ENCODE measurements at regions of chr9 and their contacts with region 1.

Region 1: DNA sequence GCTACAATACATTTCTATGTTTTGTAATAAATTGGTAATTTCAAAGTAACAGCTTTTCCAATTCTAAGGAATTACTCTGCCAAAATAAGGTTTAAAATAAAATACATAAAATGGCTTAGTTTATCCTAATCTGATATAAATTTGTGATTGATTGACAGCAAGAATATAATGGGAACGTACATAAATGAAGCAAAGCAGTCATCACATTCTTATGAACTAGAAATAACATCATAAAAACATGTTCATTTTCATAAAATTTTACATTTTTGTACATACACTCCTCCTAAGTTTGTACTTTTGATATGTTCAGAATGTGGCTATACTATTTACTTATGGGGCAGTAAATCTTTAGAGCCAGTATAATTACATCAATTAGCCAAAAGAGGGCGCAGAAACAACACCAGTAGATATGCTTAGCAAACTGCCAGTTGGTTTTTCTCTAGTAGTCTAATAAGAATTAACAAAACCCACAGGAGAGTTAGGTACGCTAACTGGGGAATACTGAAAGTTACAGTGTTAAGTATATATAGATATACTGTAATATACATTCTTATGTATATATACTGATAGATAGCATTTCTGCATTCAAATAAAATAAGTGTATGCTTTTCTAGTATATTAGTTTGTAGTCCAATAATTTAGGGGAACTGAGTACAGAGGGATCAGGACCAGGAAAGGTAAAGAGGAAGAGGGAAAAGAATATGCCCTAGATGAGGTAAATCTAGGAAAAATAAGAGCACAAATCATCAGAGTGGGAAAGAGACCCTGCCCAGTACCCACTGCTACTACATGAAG is 76.8 kb downstream of the ZDHHC21 start:
- DNase-seq: peak; percentile 64
- ATAC-seq: peak; percentile 65
- H3K4me3 ChIP-seq: no peak overlapping the region
- H3K27ac ChIP-seq: no peak overlapping the region
- H3K4me1 ChIP-seq: no peaks in the 10 kb centered on the region
- H3K27me3 ChIP-seq: no peaks in the 10 kb centered on the region
- CTCF ChIP-seq: peak; percentile 76

Region 2: DNA sequence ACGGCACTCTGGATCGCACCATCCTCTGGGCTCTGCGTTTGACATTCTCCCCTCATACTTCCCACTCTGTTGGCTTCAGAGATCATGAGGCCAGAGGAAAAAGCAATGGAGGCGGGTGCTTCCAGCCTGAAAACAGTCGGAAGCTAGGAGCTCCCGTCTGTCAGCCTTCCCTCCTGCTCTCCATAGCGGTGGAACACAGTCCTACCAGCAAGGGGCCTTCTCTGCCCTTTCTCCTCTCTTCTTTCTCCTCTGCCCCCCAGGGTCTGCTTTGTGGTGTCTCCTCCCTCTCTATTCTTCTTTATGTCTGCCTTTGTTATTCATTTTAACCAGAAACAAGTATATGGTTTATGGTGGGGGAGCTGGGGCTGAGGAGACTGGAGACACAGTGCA is 150.0 kb before region 1 on chr9:
- CTCF ChIA-PET with region 1: no interaction called
- POLR2A ChIA-PET with region 1: no interaction called
- intact Hi-C with region 1: loop called (anchors 2 kb)
- DNase-seq: no peak
- ATAC-seq: no peak
- H3K4me3 ChIP-seq: no peak overlapping the region
- H3K27ac ChIP-seq: no peak overlapping the region
- H3K4me1 ChIP-seq: no peaks in the 10 kb centered on the region
- H3K27me3 ChIP-seq: no peaks in the 10 kb centered on the region
- CTCF ChIP-seq: no peak

Region 3: DNA sequence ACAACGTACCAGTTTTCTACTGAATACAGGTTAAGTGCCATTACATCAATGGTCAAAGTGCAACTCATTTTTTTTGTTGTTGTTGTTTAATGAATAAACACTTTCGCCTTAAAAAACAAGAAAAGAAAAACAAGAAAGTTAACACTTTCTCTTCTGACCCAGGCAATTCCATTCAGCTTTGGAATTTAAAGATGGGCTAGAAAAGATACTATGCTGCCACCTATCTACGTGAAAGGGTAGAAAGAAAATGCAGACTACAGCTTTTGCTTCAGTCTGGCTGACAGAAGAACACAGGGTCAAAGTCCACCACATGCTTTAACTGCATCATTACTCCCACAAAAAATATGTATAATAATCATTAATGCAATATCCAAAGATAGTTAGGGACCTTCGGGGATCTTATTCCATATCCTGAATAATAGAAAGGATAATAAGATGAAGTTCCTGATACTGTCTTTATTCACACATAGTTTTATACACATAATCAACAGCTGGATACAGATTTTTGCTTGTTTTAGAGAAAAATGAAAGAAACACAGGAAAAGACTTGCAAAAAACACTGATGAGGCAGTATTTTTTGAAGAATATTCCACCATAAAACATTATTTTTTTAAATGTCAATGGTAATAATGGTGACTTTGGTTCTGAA is 36.5 kb after region 1 on chr9:
- CTCF ChIA-PET with region 1: no interaction called
- POLR2A ChIA-PET with region 1: no interaction called
- intact Hi-C with region 1: loop called (anchors 5 kb)
- DNase-seq: peak; percentile 37
- ATAC-seq: peak; percentile 49; the same call in 1 of the 2 replicates
- H3K4me3 ChIP-seq: no peak overlapping the region
- H3K27ac ChIP-seq: no peak overlapping the region
- H3K4me1 ChIP-seq: no peaks in the 10 kb centered on the region
- H3K27me3 ChIP-seq: no peaks in the 10 kb centered on the region
- CTCF ChIP-seq: peak; percentile 70

Region 4: GRCh38 chr9:14661421-14662059 is 45.2 kb after region 1 on chr9:
- CTCF ChIA-PET with region 1: no interaction called
- POLR2A ChIA-PET with region 1: no interaction called
- intact Hi-C with region 1: loop called (anchors 2 kb)
- DNase-seq: peak; percentile 62
- ATAC-seq: no peak
- H3K4me3 ChIP-seq: no peak overlapping the region
- H3K27ac ChIP-seq: no peak overlapping the region
- H3K4me1 ChIP-seq: no peaks in the 10 kb centered on the region
- H3K27me3 ChIP-seq: no peaks in the 10 kb centered on the region
- CTCF ChIP-seq: peak; percentile 73

Region 5: DNA sequence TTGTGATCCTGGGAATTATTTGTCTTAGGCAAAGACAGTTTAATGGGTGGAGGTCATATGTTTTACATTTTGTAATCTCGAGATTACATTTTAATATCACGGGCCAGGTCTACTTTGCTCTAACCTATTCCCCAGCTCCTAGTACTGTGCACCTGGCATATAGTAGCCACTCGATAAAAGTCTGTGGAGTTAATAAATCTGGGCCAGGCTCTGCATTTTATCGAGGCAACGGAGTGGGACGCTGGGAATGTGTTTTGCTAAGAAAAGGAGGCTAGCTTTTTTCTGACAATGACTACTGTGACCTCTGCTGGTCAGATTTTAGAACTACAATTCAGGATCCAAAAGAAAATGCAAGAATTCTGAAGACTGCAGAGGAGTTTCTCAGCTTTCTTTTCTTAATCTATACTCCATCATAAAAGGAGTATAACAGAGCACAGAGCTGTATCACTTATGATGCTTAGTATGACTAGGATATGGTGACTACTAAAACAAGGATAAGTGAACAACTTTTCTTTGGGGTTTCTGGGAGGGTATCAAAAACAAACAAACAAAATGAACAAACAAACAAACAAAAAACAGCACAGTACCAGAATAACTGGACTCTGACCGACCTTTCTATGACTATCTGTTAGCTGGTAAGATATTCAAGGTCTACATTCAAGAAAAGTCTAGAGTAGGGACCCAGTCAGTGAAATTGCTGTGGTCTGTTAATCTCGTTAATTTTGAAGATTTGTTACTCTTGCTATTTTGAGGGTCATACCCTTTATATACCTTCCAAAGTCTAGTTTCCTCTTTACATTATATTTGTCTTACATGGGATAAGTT is 152.2 kb after region 1 on chr9:
- CTCF ChIA-PET with region 1: no interaction called
- POLR2A ChIA-PET with region 1: no interaction called
- intact Hi-C with region 1: loop called (anchors 1 kb)
- DNase-seq: peak; percentile 79
- ATAC-seq: peak; percentile 64
- H3K4me3 ChIP-seq: peak overlapping the region; percentile 50; the same call in 1 of the 2 replicates
- H3K27ac ChIP-seq: no peak overlapping the region
- H3K4me1 ChIP-seq: peaks cover 15% of the 10 kb centered on the region
- H3K27me3 ChIP-seq: no peaks in the 10 kb centered on the region
- CTCF ChIP-seq: peak; percentile 71

Measured in PC-3 (cell line).